HEK293 (cell line): ENCODE measurements at regions of chr7 and their contacts with region 1.

Region 1: DNA sequence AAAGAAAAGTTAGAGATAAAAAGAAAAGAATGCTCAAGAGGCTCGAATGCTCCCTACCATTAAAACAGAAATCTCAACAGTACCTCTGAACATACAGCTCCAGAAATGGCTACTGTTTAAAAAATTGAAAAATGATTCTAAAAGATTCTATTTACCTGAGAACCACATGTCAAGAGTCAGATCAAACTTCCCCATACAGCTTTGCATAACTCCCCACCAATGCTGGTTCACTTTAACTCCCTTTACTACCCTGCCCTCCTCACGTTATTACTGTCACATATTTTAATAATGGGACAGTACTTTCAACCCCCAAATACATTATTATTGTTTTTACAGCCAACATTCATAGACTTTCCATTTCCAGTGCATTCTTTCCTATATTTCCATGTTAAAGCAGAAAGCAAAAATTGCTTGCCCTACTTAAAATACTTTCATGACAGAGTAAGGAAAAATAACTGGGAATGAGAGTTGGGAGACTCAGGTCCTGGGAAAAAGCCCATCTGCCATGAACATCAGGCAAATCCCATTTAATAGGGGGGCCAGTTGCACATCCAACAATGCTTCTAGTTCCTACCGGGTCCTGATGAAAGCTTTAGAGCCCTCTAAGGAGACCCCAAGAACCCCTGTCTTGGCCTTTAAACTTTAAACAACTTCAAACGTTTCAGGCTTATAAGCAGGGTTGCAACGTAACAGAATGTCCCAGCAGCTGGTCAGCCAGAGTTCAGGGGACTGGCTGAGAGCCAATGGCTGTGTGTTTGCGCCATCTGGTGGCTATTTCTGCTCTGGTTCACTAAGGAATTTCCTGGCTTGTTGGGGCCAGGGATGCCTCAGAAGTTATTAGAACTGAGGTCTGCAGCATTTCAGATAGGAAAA is 247.4 kb downstream of the ELMO1 start:
- H3K4me3 ChIP-seq: no peak overlapping the region
- H3K27ac ChIP-seq: no peak overlapping the region
- H3K4me1 ChIP-seq: no peaks in the 10 kb centered on the region
- CTCF ChIP-seq: peak; percentile 35; the same call in 1 of the 2 replicates

Region 2: GRCh38 chr7:36986429-36987362 is 214.5 kb before region 1 on chr7:
- CTCF ChIA-PET with region 1: interaction called, 14 read pairs
- POLR2A ChIA-PET with region 1: no interaction called
- H3K4me3 ChIP-seq: no peak overlapping the region
- H3K27ac ChIP-seq: no peak overlapping the region
- H3K4me1 ChIP-seq: peaks cover 3% of the 10 kb centered on the region; the same call in 1 of the 2 replicates
- CTCF ChIP-seq: peak; percentile 42; the same call in 1 of the 2 replicates